Tibial artery (tissue), 4 donors: ENCODE measurements at regions of chr14 and their contacts with region 1.

Region 1: GRCh38 chr14:99415496-99416281 is 65.0 kb downstream of the SETD3 start:
- DNase-seq: peak in 1 of 2 donors; percentile 43
- H3K4me3 ChIP-seq: no peak overlapping the region
- H3K27ac ChIP-seq: no peak overlapping the region
- H3K4me1 ChIP-seq: no peaks in the 10 kb centered on the region
- H3K27me3 ChIP-seq: no peaks in the 10 kb centered on the region
- CTCF ChIP-seq: peak; percentile 67 to 70

Region 2: GRCh38 chr14:99344051-99344758 is 71.5 kb before region 1 on chr14:
- intact Hi-C with region 1: no loop called
- DNase-seq: no peak
- H3K4me3 ChIP-seq: no peak overlapping the region
- H3K27ac ChIP-seq: no peak overlapping the region
- H3K4me1 ChIP-seq: no peaks in the 10 kb centered on the region
- H3K27me3 ChIP-seq: no peaks in the 10 kb centered on the region
- CTCF ChIP-seq: no peak

Region 3: DNA sequence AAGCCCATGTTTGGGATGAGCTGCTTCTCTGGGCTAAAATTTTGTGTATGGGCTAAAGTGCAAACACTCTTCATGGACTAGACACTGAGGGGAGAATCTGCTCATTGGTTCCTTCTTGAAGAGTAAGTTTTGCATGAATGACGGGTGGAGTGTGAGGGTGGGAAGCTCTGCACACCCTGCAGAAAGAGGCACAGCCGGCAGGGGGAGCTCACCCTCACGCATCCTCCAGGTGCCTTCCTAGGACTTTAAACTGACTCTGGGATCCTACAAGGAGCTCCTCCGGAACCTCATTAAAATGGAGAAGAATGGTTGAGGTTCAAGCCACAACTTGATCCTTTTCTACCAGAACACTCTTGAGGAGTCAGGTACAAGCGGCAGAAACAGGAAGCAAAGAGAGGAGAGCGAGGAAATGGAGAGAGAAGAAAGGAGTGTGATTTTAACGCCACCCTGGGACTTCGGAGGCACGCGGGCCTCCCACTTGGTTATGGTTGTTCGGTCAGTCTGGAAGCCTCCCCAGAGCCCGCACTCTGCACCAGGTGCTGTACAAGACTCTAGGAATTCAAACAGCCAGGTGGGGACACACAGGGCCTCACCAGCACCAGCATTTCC is 22.5 kb before region 1 on chr14:
- intact Hi-C with region 1: loop called (anchors 2 kb)
- DNase-seq: no peak
- H3K4me3 ChIP-seq: no peak overlapping the region
- H3K27ac ChIP-seq: no peak overlapping the region
- H3K4me1 ChIP-seq: peaks cover 0 to 4% (median 0%) of the 10 kb centered on the region in 4 donors
- H3K27me3 ChIP-seq: no peaks in the 10 kb centered on the region
- CTCF ChIP-seq: peak; percentile 31 to 47